Dendritic cell treated with granulocyte-macrophage colony-stimulating factor and Interleukin-4, amounts not matched to agents 40 ng/mL and 50 ng/mL, for 4 days (primary cell): ENCODE measurements at regions of chr12 and their contacts with region 1.

Region 1: GRCh38 chr12:70255311-70255710 is 12.1 kb downstream of the CNOT2 start:
- H3K4me3 Mint-ChIP-seq: no peak overlapping the region
- H3K27ac Mint-ChIP-seq: no peak overlapping the region
- H3K4me1 Mint-ChIP-seq: peaks cover 26% of the 10 kb centered on the region
- H3K27me3 Mint-ChIP-seq: no peaks in the 10 kb centered on the region

Region 2: DNA sequence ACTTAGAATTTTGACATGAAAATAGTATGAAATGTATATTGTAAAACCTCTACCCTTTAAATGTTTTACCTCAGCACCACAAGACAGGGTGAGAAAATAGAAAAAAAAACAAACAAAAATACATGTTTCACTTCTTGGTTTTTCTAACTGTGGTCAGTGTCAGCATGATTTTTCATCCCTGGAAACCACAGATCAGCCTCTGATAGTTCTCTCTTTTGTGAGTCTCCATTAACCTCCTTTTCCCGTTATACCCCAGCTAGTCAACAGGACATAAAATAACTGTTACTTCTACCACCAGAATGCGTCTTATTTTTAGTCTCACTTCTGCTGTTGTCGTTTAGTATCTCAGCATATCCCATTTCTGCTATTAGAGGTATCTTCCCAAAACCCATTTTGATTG is 62.5 kb after region 1 on chr12:
- intact Hi-C with region 1: loop called (anchors 10 kb)
- H3K4me3 Mint-ChIP-seq: no peak overlapping the region
- H3K27ac Mint-ChIP-seq: peak overlapping the region; percentile 63
- H3K4me1 Mint-ChIP-seq: peaks cover 32% of the 10 kb centered on the region
- H3K27me3 Mint-ChIP-seq: no peaks in the 10 kb centered on the region